ENCODE measurements at regions of chr1 and their contacts with region 1.

Region 1: GRCh38 chr1:205711104-205712020 is 31.1 kb upstream of the SLC45A3 start:
- DNase-seq: peak; percentile 87
- ATAC-seq: peak; percentile 96
- H3K4me3 ChIP-seq: no peak overlapping the region
- H3K4me3 Mint-ChIP-seq: no peak overlapping the region
- H3K27ac ChIP-seq: no peak overlapping the region
- H3K27ac Mint-ChIP-seq: peak overlapping the region; percentile 39
- H3K4me1 ChIP-seq: peaks cover 13 to 16% of the 10 kb centered on the region in 2 donors
- H3K4me1 Mint-ChIP-seq: peaks cover 22% of the 10 kb centered on the region
- H3K27me3 ChIP-seq: no peaks in the 10 kb centered on the region
- H3K27me3 Mint-ChIP-seq: no peaks in the 10 kb centered on the region
- CTCF ChIP-seq: peak; percentile 95

Region 2: DNA sequence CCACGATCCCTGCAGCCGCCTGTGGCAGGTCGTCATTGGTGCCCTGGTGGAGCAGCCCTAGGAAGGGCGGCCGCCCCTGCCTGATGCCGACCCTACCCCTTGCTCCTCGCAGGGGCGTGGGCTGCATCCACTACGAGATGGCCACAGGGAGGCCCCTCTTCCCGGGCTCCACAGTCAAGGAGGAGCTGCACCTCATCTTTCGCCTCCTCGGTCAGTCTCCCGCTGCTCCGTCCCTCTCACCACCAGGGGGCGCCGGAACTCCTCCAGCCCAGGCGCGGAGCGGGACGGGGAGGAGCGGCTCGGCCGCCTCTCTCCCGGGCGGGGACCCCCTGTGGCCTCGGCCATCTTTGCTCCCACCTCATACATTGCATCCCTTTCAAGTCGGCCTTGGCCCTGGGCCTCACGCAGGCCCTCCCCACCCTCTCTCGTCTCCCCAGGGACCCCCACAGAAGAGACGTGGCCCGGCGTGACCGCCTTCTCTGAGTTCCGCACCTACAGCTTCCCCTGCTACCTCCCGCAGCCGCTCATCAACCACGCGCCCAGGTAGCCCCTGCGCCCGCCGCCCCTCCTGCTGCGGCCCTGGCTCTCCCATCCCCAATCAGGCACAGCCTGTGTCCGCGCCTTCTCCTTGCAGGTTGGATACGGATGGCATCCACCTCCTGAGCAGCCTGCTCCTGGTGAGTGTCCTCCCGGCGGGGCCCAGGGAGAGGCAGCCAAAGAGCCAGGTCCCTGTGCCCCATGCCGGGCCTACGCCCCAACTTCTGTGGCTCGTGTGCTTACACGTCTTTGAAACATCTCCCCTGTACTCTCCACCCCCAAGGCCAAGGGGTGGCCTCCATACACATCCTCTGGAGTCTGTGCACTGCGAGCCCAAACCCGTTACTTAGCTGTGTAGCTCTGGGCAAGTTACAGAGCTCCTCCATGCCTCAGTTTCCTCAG is 182.2 kb before region 1 on chr1:
- CTCF ChIA-PET with region 1: interaction called, 18 read pairs
- POLR2A ChIA-PET with region 1: no interaction called
- intact Hi-C with region 1: loop called (anchors 1 kb)
- DNase-seq: peak; percentile 86
- ATAC-seq: peak; percentile 85
- H3K4me3 ChIP-seq: peak overlapping the region in 4 of 5 experiments; percentile 25 to 60 (median 38)
- H3K4me3 Mint-ChIP-seq: peak overlapping the region; percentile 79
- H3K27ac ChIP-seq: no peak overlapping the region
- H3K27ac Mint-ChIP-seq: peak overlapping the region; percentile 26
- H3K4me1 ChIP-seq: peaks cover 4 to 10% of the 10 kb centered on the region in 2 donors
- H3K4me1 Mint-ChIP-seq: peaks cover 7% of the 10 kb centered on the region
- H3K27me3 ChIP-seq: peaks cover 0 to 2% (median 0%) of the 10 kb centered on the region in 4 experiments
- H3K27me3 Mint-ChIP-seq: peaks cover 4% of the 10 kb centered on the region
- CTCF ChIP-seq: peak; percentile 97

Region 3: GRCh38 chr1:205563867-205564441 is 147.4 kb before region 1 on chr1:
- CTCF ChIA-PET with region 1: no interaction called
- POLR2A ChIA-PET with region 1: no interaction called
- intact Hi-C with region 1: no loop called
- DNase-seq: no peak
- ATAC-seq: no peak
- H3K4me3 ChIP-seq: no peak overlapping the region
- H3K4me3 Mint-ChIP-seq: no peak overlapping the region
- H3K27ac ChIP-seq: no peak overlapping the region
- H3K27ac Mint-ChIP-seq: no peak overlapping the region
- H3K4me1 ChIP-seq: peaks cover 6% of the 10 kb centered on the region in 2 donors
- H3K4me1 Mint-ChIP-seq: peaks cover 4% of the 10 kb centered on the region
- H3K27me3 ChIP-seq: peaks cover 0 to 27% (median 14%) of the 10 kb centered on the region in 4 experiments
- H3K27me3 Mint-ChIP-seq: peaks cover 31% of the 10 kb centered on the region
- CTCF ChIP-seq: no peak

Region 4: GRCh38 chr1:205631727-205632373 is 79.5 kb before region 1 on chr1 and contains the start of gene ELK4:
- CTCF ChIA-PET with region 1: interaction called, 11 read pairs
- POLR2A ChIA-PET with region 1: interaction called, 3 read pairs
- intact Hi-C with region 1: loop called (anchors 1 kb)
- DNase-seq: peak; percentile 99
- ATAC-seq: peak; percentile 81
- H3K4me3 ChIP-seq: peak within 1 kb of the TSS; percentile 57 to 94 (median 72)
- H3K4me3 Mint-ChIP-seq: peak within 1 kb of the TSS; percentile 94
- H3K27ac ChIP-seq: peak within 1 kb of the TSS; percentile 85 to 93
- H3K27ac Mint-ChIP-seq: peak within 1 kb of the TSS; percentile 96
- H3K4me1 ChIP-seq: peaks cover 33 to 41% of the 10 kb centered on the region in 2 donors
- H3K4me1 Mint-ChIP-seq: peaks cover 44% of the 10 kb centered on the region
- H3K27me3 ChIP-seq: no peaks in the 10 kb centered on the region
- H3K27me3 Mint-ChIP-seq: no peaks in the 10 kb centered on the region
- CTCF ChIP-seq: peak; percentile 80
- total RNA-seq, gene ELK4: 143 and 151 TPM in 2 replicates

Region 5: DNA sequence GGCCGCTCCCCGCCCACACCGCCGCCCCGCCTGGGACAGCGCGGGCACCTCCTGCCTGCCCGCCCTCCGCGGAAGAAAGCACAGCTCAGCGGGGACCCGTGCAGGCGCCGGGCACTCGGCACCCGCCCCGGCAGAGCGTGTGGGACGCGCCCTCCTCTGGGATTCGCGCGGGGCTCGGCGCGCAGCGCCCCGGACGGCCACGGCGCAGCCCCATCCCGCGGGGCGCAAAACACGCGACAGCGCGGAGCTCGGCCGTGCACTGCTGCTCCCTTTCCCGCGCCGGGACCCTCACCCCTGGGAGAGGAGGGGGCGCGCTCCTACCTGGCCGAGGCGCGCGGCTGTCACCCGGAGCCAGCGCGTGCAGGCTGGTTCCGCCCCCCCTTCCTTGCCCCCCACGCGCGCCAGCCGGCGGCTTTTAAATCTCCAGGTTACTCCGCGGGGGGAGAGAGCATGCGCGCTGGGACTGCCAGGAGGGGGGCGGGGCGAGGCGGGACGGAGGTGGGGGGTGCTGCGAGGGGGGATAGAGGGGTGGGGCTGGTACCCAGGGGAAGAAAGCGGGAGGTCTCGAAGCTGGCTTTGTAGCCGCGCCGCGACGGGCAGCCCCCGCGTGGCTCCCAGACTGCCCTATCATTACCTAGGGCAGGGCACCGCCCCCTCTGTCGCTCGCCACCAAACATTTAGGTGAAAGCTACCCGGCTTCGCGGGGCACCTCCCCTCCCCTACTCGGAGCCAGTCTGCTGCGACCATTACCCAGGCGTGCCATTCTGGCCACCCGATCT is 31.1 kb before region 1 on chr1 and contains the start of gene SLC45A3:
- CTCF ChIA-PET with region 1: interaction called, 943 read pairs
- POLR2A ChIA-PET with region 1: no interaction called
- intact Hi-C with region 1: no loop called
- DNase-seq: peak; percentile 73
- ATAC-seq: peak; percentile 62
- H3K4me3 ChIP-seq: peak within 1 kb of the TSS; percentile 27 to 80 (median 70)
- H3K4me3 Mint-ChIP-seq: peak within 1 kb of the TSS; percentile 89
- H3K27ac ChIP-seq: peak within 1 kb of the TSS in 1 of 2 donors; percentile 62
- H3K27ac Mint-ChIP-seq: peak within 1 kb of the TSS; percentile 63
- H3K4me1 ChIP-seq: peaks cover 29 to 37% of the 10 kb centered on the region in 2 donors
- H3K4me1 Mint-ChIP-seq: peaks cover 32% of the 10 kb centered on the region
- H3K27me3 ChIP-seq: no peaks in the 10 kb centered on the region
- H3K27me3 Mint-ChIP-seq: no peaks in the 10 kb centered on the region
- CTCF ChIP-seq: no peak
- total RNA-seq, gene SLC45A3: 4.7 and 5.0 TPM in 2 replicates

Region 6: DNA sequence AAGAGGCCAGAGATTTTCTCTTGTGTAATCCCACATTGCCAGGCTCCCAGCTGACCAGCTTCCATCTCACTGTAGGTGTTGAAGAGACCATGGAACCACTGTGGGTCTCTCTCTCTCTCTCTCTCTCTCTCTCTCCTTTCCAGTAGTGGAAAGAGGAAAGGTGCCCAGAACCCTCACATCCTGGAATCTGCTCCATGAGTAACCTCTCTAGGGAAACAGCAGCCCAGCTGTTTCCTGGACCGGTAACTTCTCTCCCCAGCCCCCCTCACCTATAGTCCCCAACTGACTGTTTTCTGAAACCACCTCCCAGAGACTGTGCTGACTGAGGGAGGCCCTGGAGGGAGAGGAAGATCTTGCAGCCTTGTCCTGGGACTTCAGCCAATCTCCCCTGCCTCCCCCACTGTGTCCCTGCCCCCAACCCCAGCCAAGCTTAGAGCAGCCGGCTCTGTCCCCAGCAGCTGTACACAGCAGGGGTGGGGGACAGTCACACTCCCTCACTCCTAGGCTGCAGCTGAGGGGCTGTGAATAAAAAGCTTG is 10.4 kb before region 1 on chr1:
- CTCF ChIA-PET with region 1: interaction called, 68 read pairs
- POLR2A ChIA-PET with region 1: no interaction called
- intact Hi-C with region 1: no loop called
- DNase-seq: no peak
- ATAC-seq: no peak
- H3K4me3 ChIP-seq: no peak overlapping the region
- H3K4me3 Mint-ChIP-seq: no peak overlapping the region
- H3K27ac ChIP-seq: no peak overlapping the region
- H3K27ac Mint-ChIP-seq: no peak overlapping the region
- H3K4me1 ChIP-seq: peaks cover 29 to 30% of the 10 kb centered on the region in 2 donors
- H3K4me1 Mint-ChIP-seq: peaks cover 21% of the 10 kb centered on the region
- H3K27me3 ChIP-seq: no peaks in the 10 kb centered on the region
- H3K27me3 Mint-ChIP-seq: no peaks in the 10 kb centered on the region
- CTCF ChIP-seq: no peak

Region 7: DNA sequence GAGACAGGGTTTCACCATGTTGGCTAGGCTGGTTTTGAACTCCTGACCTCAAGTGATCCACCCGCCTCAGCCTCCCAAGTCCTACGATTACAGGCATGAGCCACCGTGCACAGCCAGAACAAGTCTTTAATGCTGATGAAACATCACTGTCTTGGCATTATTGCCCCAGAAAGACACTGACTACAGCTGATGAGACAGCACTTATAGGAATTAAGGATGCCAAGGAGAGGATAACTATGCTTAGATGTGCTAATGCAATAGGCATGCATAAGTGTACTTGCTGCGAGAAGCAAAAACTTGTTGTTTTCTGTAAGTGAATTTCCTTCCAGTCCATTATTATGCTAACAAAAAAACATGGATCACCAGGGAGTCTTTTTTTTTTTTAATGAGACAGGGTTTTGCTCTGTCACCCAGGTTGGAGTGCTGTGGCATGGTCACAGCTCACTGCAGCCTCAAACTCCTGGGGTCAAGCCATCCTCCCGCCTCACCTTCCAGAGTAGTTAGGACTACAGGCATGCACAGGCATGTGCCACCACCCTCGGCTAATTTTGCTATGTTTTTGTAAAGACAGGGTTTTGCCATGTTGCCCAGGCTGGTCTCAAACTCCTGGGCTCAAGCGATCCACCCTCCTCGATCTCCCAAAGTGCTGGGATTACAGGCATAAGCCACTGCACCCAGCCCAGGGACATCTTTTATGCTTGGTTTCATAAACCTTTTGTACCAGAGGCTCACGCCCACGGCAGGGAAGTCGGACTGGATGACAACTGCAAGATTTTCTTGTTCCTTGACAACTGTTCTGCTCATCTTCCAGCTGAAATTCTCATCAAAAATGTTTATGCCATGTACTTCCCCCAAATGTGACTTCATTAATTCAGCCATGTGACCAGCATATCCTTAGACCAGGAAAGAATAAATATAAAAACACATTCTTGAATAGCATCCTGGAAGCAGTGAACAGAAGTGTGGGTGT is 364.7 kb after region 1 on chr1:
- CTCF ChIA-PET with region 1: no interaction called
- POLR2A ChIA-PET with region 1: no interaction called
- intact Hi-C with region 1: no loop called
- DNase-seq: no peak
- ATAC-seq: no peak
- H3K4me3 ChIP-seq: no peak overlapping the region
- H3K4me3 Mint-ChIP-seq: no peak overlapping the region
- H3K27ac ChIP-seq: no peak overlapping the region
- H3K27ac Mint-ChIP-seq: no peak overlapping the region
- H3K4me1 ChIP-seq: peaks cover 11 to 14% of the 10 kb centered on the region in 2 donors
- H3K4me1 Mint-ChIP-seq: peaks cover 26% of the 10 kb centered on the region
- H3K27me3 ChIP-seq: no peaks in the 10 kb centered on the region
- H3K27me3 Mint-ChIP-seq: no peaks in the 10 kb centered on the region
- CTCF ChIP-seq: no peak

Measured in B cell (primary cell).